Lower lobe of right lung (tissue), 2 donors: ENCODE measurements at regions of chr16 and their contacts with region 1.

Region 1: DNA sequence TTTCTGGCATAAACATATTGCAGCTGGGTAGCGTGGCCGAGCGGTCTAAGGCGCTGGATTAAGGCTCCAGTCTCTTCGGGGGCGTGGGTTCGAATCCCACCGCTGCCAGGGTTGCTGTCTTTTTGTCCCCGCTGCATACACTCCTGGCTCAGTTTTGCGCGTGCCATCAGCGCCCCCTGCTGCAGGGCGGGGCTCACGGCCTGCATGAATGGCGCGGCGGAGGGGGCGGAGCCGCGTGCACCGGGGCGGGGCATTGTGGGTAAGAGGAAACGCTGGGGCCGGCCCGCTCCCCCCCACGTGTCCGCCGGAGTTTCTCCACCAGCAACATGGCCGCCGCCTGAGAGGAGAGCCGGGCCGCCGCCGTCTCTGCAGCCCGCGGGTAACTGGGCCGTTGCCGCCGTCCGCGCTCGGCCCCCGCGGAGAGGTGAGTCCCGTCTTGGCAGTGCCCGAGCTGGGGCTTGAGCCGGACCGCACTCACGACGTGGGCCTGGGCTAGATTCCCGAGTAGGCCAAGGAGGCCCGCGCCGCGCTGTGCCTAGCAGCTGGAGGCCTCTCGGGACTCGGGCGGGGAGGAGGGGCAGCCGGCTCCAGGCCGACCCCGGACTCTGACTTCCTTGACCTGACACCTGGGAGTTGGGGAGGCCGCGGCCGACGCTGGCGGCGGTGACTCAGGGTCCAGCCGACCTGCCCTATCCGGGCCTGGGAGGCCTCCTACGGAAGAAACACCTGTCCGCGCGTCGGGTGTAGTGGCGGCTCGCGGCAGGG is at the start of gene POLR3E:
- DNase-seq: peak; percentile 99
- ATAC-seq: peak; percentile 97 to 99
- H3K4me3 ChIP-seq: peak within 1 kb of the TSS; percentile 95
- H3K27ac ChIP-seq: peak within 1 kb of the TSS; percentile 92
- H3K4me1 ChIP-seq: peaks cover 29% of the 10 kb centered on the region
- H3K27me3 ChIP-seq: no peaks in the 10 kb centered on the region
- CTCF ChIP-seq: peak; percentile 93
- total RNA-seq, gene POLR3E: 36.6 TPM

Region 2: DNA sequence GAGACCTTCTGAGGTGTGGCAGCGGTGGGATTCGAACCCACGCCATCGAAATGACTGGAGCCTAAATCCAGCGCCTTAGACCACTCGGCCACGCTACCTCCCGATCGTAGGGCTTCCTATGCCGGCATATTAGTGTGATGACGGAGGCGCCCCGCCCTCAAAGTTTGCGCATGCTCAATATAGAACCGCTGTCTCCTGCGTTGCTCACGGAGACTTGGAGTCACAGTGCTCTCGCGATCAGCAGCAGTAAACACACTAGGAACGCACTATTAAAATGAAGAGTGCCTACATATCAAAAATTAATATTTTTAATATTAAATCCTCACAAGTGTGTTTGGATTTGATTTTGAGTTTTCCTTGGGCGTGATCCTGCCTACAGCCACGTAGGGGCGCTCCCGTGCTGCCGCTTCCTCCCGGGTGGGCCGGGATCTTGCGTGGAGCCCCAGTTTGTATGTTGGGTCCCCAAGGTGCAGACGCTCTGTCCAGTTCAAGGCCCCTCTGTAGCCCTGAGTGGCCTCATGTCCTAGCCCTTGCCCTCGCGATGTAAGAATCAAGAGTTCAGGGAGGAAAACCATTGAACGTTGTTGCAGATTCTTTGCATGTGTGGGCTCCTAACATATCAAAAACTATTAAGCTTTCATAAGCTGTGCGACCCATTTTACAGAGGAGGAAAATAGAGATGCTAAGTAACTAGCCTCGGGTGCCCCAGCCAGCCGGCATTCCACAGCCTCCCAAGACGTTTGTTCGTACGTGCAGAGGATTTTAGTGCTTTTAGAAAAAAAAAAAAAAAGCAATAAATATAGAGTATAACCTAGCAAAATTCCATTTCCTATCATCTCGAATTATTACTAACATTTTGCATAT is 101.4 kb before region 1 on chr16:
- intact Hi-C with region 1: loop called (anchors 5 kb)
- DNase-seq: peak; percentile 90
- ATAC-seq: peak; percentile 54 to 63
- H3K4me3 ChIP-seq: peak overlapping the region; percentile 63
- H3K27ac ChIP-seq: peak overlapping the region; percentile 80
- H3K4me1 ChIP-seq: peaks cover 45% of the 10 kb centered on the region
- H3K27me3 ChIP-seq: no peaks in the 10 kb centered on the region
- CTCF ChIP-seq: peak; percentile 94

Region 3: DNA sequence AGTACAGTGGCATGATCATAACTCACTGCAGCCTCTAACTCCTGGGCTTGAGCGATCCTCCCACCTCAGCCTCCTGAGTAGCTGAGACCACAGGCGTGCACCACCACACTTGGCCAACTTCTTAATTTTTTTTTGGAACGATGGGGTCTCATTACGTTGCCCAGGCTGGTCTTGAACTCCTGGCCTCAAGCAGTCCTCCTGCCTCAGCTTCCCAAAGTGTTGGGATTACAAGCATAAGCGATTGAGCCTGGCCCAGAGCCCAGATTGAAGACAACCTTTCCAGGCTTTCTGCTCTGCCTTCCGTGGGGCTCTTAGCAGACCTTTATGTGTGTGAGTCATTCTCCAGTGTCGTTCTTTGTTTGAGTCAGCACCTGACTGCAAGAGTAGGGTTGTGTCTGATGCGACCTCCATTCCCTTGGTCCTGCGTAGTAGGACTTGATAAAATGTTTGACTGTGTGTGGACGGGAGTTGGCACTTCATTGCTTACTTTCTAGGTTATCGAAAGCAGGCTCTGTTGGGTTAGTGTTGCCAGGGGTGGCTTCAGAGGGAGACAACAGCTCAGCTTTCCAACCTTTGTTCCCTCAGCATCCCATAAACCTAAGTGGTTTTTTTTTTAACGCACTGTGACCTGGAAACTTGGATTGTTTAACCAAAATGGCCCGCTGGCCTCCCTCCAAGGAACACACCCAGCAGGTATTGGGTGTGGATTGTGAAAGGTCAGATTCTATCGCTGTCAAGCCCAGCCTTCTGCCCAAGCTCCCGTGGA is 64.8 kb before region 1 on chr16:
- intact Hi-C with region 1: no loop called
- DNase-seq: peak; percentile 76
- ATAC-seq: peak; percentile 70 to 80
- H3K4me3 ChIP-seq: no peak overlapping the region
- H3K27ac ChIP-seq: peak overlapping the region; percentile 53
- H3K4me1 ChIP-seq: peaks cover 12% of the 10 kb centered on the region
- H3K27me3 ChIP-seq: no peaks in the 10 kb centered on the region
- CTCF ChIP-seq: no peak